Dendritic cell treated with granulocyte-macrophage colony-stimulating factor and Interleukin-4, amounts not matched to agents 40 ng/mL and 50 ng/mL, for 4 days (primary cell): ENCODE measurements at regions of chr4 and their contacts with region 1.

Region 1: GRCh38 chr4:138190452-138190858 is 51.7 kb downstream of the SLC7A11 start:
- H3K4me3 Mint-ChIP-seq: peak overlapping the region; percentile 5
- H3K27ac Mint-ChIP-seq: peak overlapping the region; percentile 83
- H3K4me1 Mint-ChIP-seq: peaks cover 59% of the 10 kb centered on the region
- H3K27me3 Mint-ChIP-seq: no peaks in the 10 kb centered on the region

Region 2: DNA sequence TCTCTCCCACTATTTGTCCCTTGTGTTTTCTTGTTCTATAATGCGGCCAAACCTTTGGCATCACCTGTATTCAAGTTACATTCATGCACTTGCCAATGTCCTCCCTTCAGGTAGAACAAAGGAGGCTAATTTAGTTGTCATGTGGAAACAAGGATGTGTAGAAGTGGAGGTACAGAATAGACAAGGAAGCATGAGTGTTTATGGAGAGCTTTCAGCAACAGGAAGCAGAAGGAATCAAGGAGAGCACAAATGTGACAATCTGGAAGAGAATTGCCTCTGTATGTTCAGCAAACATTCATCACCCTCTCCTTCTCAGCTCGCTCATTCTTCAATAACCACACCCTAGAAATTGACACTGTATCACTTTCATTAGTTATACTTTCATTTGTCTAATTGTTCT is 51.7 kb before region 1 on chr4:
- intact Hi-C with region 1: no loop called
- H3K4me3 Mint-ChIP-seq: no peak overlapping the region
- H3K27ac Mint-ChIP-seq: no peak overlapping the region
- H3K4me1 Mint-ChIP-seq: no peaks in the 10 kb centered on the region
- H3K27me3 Mint-ChIP-seq: peaks cover 2% of the 10 kb centered on the region

Region 3: DNA sequence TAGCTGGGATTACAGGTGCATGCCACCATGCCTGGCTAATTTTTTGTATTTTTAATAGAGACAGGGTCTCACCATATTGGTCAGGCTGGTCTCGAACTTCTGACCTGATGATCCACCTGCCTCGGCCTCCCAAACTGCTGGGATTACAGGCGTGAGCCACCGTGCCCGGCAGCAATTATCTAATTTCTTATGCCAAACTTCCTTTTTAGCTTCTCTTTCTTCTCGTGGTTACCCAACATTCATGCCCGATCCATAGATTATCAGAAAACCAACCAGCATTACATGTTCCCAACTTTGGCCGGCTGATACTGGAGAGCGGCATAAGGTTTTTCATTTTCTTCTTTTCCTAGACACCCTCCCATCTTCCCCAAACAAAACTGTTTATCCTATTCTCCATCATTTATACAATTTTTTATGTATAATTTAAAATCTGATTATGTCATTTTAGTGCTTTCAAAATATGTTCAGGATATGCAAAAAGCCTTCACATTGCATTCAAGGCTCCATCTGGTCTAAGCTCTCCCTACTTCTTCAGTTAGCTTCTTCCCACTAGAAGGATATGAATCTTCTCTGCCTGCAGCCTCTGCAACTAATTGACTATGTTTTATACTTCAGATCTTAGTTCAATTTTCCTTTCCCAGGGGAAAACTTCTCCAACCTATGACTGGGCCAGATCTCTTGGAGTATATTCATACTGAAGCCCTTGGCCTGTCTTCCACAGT is 43.0 kb after region 1 on chr4:
- intact Hi-C with region 1: loop called (anchors 5 kb)
- H3K4me3 Mint-ChIP-seq: no peak overlapping the region
- H3K27ac Mint-ChIP-seq: peak overlapping the region; percentile 84
- H3K4me1 Mint-ChIP-seq: peaks cover 25% of the 10 kb centered on the region
- H3K27me3 Mint-ChIP-seq: no peaks in the 10 kb centered on the region

Region 4: GRCh38 chr4:138398322-138398721 is 207.9 kb after region 1 on chr4:
- intact Hi-C with region 1: loop called (anchors 5 kb)
- H3K4me3 Mint-ChIP-seq: no peak overlapping the region
- H3K27ac Mint-ChIP-seq: peak overlapping the region; percentile 86
- H3K4me1 Mint-ChIP-seq: peaks cover 51% of the 10 kb centered on the region
- H3K27me3 Mint-ChIP-seq: no peaks in the 10 kb centered on the region

Region 5: GRCh38 chr4:138499627-138500026 is 309.2 kb after region 1 on chr4:
- intact Hi-C with region 1: no loop called
- H3K4me3 Mint-ChIP-seq: no peak overlapping the region
- H3K27ac Mint-ChIP-seq: no peak overlapping the region
- H3K4me1 Mint-ChIP-seq: peaks cover 6% of the 10 kb centered on the region
- H3K27me3 Mint-ChIP-seq: peaks cover 20% of the 10 kb centered on the region